ENCODE measurements at regions of chr16 and their contacts with region 1.

Region 1: GRCh38 chr16:54405478-54405877 is 118.9 kb upstream of the IRX3 start:
- DNase-seq: no peak
- ATAC-seq: no peak
- H3K4me3 ChIP-seq: no peak overlapping the region
- H3K27ac ChIP-seq: no peak overlapping the region
- H3K4me1 ChIP-seq: no peaks in the 10 kb centered on the region
- H3K27me3 ChIP-seq: no peaks in the 10 kb centered on the region
- CTCF ChIP-seq: no peak

Region 2: GRCh38 chr16:53098526-53099317 is 1306.8 kb before region 1 on chr16:
- CTCF ChIA-PET with region 1: no interaction called
- POLR2A ChIA-PET with region 1: interaction called, 10 read pairs
- in situ Hi-C with region 1: no loop called
- intact Hi-C with region 1: no loop called
- DNase-seq: no peak
- ATAC-seq: peak; percentile 73
- H3K4me3 ChIP-seq: peak overlapping the region; percentile 29 to 44
- H3K27ac ChIP-seq: peak overlapping the region; percentile 96
- H3K4me1 ChIP-seq: peaks cover 22% of the 10 kb centered on the region
- H3K27me3 ChIP-seq: no peaks in the 10 kb centered on the region
- CTCF ChIP-seq: no peak

Region 3: GRCh38 chr16:54355251-54355650 is 50.2 kb before region 1 on chr16:
- CTCF ChIA-PET with region 1: no interaction called
- POLR2A ChIA-PET with region 1: interaction called, 22 read pairs
- in situ Hi-C with region 1: no loop called
- intact Hi-C with region 1: no loop called
- DNase-seq: no peak
- ATAC-seq: no peak
- H3K4me3 ChIP-seq: no peak overlapping the region
- H3K27ac ChIP-seq: no peak overlapping the region
- H3K4me1 ChIP-seq: no peaks in the 10 kb centered on the region
- H3K27me3 ChIP-seq: no peaks in the 10 kb centered on the region
- CTCF ChIP-seq: no peak

Region 4: DNA sequence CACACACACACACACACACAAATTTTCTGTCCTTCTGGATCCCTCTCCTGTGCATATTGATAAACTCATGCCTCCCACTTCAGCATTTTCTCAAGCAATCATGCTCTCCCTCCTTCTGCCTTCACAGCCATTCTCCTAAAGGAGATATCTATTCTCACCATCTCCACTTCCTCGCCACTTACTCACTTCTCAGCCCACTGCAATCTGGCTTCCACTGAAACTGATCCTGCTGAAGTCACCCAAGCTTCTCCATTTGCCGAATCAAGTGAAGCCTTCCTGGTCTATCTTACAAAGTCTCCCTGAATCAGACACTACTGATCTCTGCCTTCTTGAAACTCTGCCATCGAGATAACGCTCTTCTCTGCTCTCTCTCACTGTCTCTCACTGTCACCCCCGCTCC is 1731.8 kb after region 1 on chr16:
- CTCF ChIA-PET with region 1: no interaction called
- POLR2A ChIA-PET with region 1: no interaction called
- in situ Hi-C with region 1: no loop called
- intact Hi-C with region 1: no loop called
- DNase-seq: no peak
- ATAC-seq: no peak
- H3K4me3 ChIP-seq: no peak overlapping the region
- H3K27ac ChIP-seq: no peak overlapping the region
- H3K4me1 ChIP-seq: no peaks in the 10 kb centered on the region
- H3K27me3 ChIP-seq: no peaks in the 10 kb centered on the region; the same call in 1 of the 2 replicates
- CTCF ChIP-seq: no peak

Measured in Panc1 (cell line).